ENCODE measurements at regions of chr4 and their contacts with region 1.

Region 1: DNA sequence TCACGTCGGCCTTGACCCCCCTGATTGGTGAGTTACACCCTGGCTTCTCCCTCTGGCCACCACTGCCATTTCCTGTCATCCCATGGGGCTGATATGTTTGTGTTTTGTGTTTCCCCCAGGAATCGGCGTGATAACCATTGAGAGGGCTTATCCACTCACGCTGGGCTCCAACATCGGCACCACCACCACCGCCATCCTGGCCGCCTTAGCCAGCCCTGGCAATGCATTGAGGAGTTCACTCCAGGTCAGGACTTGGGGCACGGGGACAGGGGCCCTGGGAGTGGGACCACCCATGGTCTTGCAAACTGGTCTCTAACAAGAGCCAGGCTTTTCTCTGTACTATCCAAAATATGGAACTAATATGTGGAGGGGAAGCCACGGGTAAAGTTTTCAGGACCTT is 18.7 kb downstream of the SLC34A2 start:
- DNase-seq: no peak
- ATAC-seq: no peak
- H3K4me3 ChIP-seq: no peak overlapping the region
- H3K27ac ChIP-seq: no peak overlapping the region
- H3K4me1 ChIP-seq: no peaks in the 10 kb centered on the region
- H3K27me3 ChIP-seq: no peaks in the 10 kb centered on the region

Region 2: GRCh38 chr4:25621027-25621930 is 53.1 kb before region 1 on chr4:
- intact Hi-C with region 1: loop called in 1 of 2 experiments (anchors 2 kb)
- DNase-seq: peak in 1 of 2 donors; percentile 13
- ATAC-seq: no peak
- H3K4me3 ChIP-seq: no peak overlapping the region
- H3K27ac ChIP-seq: no peak overlapping the region
- H3K4me1 ChIP-seq: no peaks in the 10 kb centered on the region
- H3K27me3 ChIP-seq: no peaks in the 10 kb centered on the region